A673 (cell line): ENCODE measurements at regions of chr15 and their contacts with region 1.

Region 1: GRCh38 chr15:30991255-30992072 is at the start of gene MTMR10:
- DNase-seq: peak; percentile 74
- H3K4me3 ChIP-seq: peak within 1 kb of the TSS; percentile 94
- H3K27ac ChIP-seq: peak within 1 kb of the TSS; percentile 89
- H3K4me1 ChIP-seq: peaks cover 7% of the 10 kb centered on the region
- H3K27me3 ChIP-seq: no peaks in the 10 kb centered on the region
- CTCF ChIP-seq: no peak
- total RNA-seq, gene MTMR10: 15.8 and 16.0 TPM in 2 replicates

Region 2: GRCh38 chr15:30903497-30904201 is 87.8 kb before region 1 on chr15 and contains the start of gene FAN1:
- CTCF ChIA-PET with region 1: no interaction called
- POLR2A ChIA-PET with region 1: no interaction called
- intact Hi-C with region 1: loop called (anchors 5 kb)
- DNase-seq: peak; percentile 98
- H3K4me3 ChIP-seq: peak within 1 kb of the TSS; percentile 72
- H3K27ac ChIP-seq: peak within 1 kb of the TSS; percentile 80
- H3K4me1 ChIP-seq: peaks cover 9% of the 10 kb centered on the region
- H3K27me3 ChIP-seq: no peaks in the 10 kb centered on the region
- CTCF ChIP-seq: 0 out of 2 replicates have a peak, but pooled peaks have one; percentile 27
- total RNA-seq, gene FAN1: 33.1 and 36.2 TPM in 2 replicates

Region 3: DNA sequence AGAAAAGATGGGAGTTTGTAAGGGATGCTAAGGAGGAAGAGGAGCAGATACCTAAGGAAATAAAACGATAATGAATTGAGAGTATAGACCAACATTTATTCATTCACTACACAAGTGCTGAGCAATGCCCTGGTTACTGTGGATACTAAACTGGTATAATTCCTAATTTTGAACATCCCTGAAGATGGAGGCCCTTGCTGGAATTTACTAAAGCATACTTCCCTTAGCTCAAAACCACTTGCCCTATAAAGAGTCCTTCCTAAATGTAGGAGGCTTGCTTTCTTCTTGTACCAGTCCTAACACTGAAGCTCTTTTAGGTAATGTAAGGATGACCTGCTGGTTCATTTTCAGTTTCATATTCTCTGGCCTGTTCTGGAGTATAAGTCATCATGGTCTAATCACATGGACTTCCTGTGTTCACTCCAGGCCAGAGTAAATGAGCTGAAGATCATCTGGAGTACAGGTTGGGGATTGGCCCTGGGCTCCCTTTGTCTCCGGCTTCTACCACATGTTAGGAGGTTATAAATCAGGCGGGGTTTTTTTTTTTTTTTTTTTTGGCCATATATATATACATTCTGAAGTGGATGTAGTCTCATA is 40.1 kb after region 1 on chr15:
- CTCF ChIA-PET with region 1: no interaction called
- POLR2A ChIA-PET with region 1: no interaction called
- intact Hi-C with region 1: loop called (anchors 5 kb)
- DNase-seq: no peak
- H3K4me3 ChIP-seq: no peak overlapping the region
- H3K27ac ChIP-seq: no peak overlapping the region
- H3K4me1 ChIP-seq: peaks cover 45% of the 10 kb centered on the region
- H3K27me3 ChIP-seq: peaks cover under 1% of the 10 kb centered on the region
- CTCF ChIP-seq: no peak